CD8-positive, alpha-beta T cell (primary cell): ENCODE measurements at regions of chr7 and their contacts with region 1.

Region 1: DNA sequence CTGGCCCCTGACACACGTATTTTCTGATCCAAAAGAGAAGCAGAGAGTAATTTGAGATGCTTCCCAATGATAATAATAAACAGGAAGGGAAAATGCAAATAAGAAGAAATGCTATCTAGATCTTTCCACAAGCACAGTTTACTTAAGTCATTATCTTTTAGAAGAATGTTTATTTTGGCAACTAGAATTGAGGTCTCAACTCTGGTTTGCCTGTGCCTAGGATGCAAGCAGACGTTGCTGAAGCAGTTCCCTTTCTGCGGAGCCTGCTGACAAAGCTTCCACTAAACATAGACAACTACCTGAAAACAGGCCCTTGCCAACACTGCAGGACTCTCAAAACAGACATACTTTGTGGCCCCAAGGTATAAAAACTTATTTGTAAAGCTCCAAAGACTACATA is 315.8 kb upstream of the POM121L12 start:
- DNase-seq: no peak
- ATAC-seq: no peak
- H3K4me3 ChIP-seq: no peak overlapping the region
- H3K4me3 Mint-ChIP-seq: no peak overlapping the region
- H3K27ac ChIP-seq: no peak overlapping the region
- H3K27ac Mint-ChIP-seq: no peak overlapping the region
- H3K4me1 ChIP-seq: no peaks in the 10 kb centered on the region
- H3K4me1 Mint-ChIP-seq: no peaks in the 10 kb centered on the region
- H3K27me3 ChIP-seq: no peaks in the 10 kb centered on the region
- H3K27me3 Mint-ChIP-seq: no peaks in the 10 kb centered on the region
- CTCF ChIP-seq: no peak

Region 2: DNA sequence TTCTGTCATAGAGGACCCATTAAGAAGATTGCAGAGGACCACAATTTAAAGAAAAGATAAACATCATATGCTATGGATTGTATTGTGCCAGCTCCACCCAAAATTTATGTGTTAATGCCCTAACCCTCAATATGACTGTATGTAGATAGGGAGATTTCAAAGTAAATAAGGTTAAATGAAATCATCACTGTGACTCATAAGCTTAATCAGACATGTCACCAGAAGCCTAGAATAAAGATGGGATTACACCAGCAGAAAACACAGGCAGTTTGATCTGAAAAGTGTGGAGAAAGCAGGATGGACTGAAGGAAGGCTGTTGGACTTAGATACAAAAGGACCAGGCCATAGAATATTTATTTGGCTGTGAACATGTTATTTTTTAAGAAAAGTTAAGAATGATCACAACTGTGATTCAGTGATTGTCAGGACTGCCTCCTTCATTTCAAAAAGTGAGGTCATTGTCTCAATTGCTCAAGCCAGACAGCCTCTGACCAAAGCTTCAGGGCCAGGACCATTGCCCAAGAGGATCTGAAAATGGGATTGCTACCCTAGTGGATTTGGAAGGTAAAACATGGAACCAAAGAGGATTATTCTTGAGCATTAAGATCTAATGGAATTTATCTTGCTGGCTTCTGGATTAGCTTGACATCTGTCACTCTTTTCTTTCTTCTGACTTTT is 45.0 kb after region 1 on chr7:
- CTCF ChIA-PET with region 1: no interaction called
- POLR2A ChIA-PET with region 1: no interaction called
- intact Hi-C with region 1: loop called in 1 of 2 experiments (anchors 10 kb)
- DNase-seq: no peak
- ATAC-seq: no peak
- H3K4me3 ChIP-seq: no peak overlapping the region
- H3K4me3 Mint-ChIP-seq: no peak overlapping the region
- H3K27ac ChIP-seq: no peak overlapping the region
- H3K27ac Mint-ChIP-seq: no peak overlapping the region
- H3K4me1 ChIP-seq: no peaks in the 10 kb centered on the region
- H3K4me1 Mint-ChIP-seq: no peaks in the 10 kb centered on the region
- H3K27me3 ChIP-seq: no peaks in the 10 kb centered on the region
- H3K27me3 Mint-ChIP-seq: no peaks in the 10 kb centered on the region
- CTCF ChIP-seq: no peak

Region 3: DNA sequence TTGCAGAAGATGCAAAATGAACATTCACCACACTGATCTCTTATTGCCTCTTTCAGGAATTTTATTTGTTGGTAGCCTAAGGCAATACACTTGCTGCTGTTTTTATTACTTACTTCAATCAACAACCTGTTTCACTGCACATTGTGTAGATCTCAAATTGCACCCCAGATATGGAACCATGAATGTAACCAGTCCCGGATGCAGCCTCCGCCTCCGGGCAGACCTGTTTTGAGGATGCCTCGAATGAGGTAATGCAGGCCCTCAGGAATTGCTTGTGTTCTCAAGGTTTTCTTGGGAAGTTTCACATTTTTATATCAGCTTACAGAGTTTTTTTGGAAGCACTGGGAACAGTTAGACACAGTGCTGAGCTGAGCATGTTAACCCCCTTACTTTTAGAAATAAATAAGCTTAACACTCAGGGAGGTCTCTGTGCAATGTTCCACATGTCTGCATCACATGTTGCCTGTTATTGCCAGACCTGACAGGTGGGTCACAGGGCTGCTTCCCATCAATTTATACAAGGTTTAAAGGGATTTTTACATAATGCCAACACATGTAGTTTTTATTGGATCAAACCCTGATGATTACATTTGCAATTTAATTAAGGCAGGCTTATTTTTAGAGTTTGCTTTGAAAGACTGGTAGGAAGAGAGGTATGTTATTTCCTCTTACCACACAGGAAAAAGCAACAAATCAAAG is 122.7 kb after region 1 on chr7:
- CTCF ChIA-PET with region 1: no interaction called
- POLR2A ChIA-PET with region 1: no interaction called
- intact Hi-C with region 1: no loop called
- DNase-seq: no peak
- ATAC-seq: no peak
- H3K4me3 ChIP-seq: no peak overlapping the region
- H3K4me3 Mint-ChIP-seq: no peak overlapping the region
- H3K27ac ChIP-seq: no peak overlapping the region
- H3K27ac Mint-ChIP-seq: no peak overlapping the region
- H3K4me1 ChIP-seq: no peaks in the 10 kb centered on the region
- H3K4me1 Mint-ChIP-seq: no peaks in the 10 kb centered on the region
- H3K27me3 ChIP-seq: no peaks in the 10 kb centered on the region
- H3K27me3 Mint-ChIP-seq: no peaks in the 10 kb centered on the region
- CTCF ChIP-seq: no peak